PC-9 (cell line): ENCODE measurements at regions of chr12 and their contacts with region 1.

Region 1: DNA sequence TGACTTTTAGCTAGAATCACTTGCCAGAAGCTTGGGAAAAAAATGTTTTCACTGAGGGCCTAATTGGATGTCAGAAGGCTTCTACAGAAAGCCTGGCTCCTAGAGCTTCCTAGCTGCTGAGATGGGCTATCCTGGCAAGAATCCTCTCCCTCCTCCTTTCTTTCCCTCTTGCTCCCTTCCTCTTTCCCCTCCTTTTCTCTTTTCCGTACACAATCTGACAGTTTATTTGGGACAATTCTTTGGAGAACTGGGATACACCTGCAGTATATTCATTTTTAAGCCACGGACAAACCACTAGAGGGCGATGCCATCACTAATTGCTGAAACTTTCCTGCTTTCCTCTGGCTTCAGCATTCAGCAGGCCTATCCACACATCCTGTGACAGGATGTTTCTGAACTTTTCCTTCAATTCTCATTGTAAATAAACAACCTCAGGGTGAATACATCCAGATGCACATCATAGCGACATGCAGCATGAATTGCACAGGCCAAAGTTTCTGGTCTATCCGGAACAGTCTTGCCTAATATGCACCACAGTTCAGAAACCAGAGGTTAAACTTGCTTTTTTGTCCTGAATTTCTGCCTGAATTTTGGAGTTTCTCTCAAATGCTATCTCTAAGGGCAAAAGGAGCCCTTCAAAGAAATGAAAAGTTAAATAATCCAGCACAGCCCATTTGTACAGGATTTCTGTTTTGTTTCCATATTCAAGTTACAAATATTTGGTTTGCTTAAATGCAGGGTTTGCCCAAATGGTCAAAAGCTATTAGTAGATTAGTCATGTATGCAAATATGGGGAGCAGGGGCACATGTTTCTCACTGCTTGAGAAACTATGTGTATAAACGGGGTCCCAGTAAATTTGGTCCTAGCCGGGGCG is 142.8 kb downstream of the PAWR start:
- DNase-seq: peak; percentile 70 to 90
- H3K4me3 ChIP-seq: peak overlapping the region; percentile 37; the same call in 1 of the 2 replicates
- H3K27ac ChIP-seq: peak overlapping the region; percentile 99
- H3K4me1 ChIP-seq: peaks cover 67% of the 10 kb centered on the region
- H3K27me3 ChIP-seq: no peaks in the 10 kb centered on the region
- CTCF ChIP-seq: peak; percentile 91

Region 2: DNA sequence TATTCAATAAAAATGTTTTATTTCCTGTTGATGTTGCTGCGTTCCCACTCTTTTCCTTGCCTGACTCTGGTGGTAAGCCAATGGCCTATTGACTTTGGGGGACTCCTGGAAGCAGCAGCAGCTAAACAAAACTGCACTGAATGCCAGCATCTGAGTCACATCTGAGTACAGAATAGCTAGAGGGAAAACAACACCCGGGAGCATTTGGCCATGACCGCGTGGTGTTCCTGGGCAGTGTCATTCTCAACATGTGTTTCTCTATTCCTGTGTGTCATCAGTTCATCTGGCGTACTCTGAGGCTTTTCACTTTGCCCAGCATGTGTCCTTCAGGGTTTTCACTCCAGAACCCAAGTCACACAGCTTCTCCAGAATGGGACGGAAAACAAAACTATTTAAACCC is 96.0 kb before region 1 on chr12:
- CTCF ChIA-PET with region 1: no interaction called
- POLR2A ChIA-PET with region 1: no interaction called
- intact Hi-C with region 1: loop called (anchors 1 kb)
- DNase-seq: peak; percentile 55 to 66
- H3K4me3 ChIP-seq: no peak overlapping the region
- H3K27ac ChIP-seq: no peak overlapping the region
- H3K4me1 ChIP-seq: no peaks in the 10 kb centered on the region
- H3K27me3 ChIP-seq: no peaks in the 10 kb centered on the region
- CTCF ChIP-seq: no peak

Region 3: GRCh38 chr12:79685068-79685467 is 137.1 kb after region 1 on chr12:
- CTCF ChIA-PET with region 1: interaction called, 3 read pairs
- POLR2A ChIA-PET with region 1: no interaction called
- intact Hi-C with region 1: loop called (anchors 1 kb)
- DNase-seq: peak in 1 of 2 experiments; percentile 76
- H3K4me3 ChIP-seq: peak overlapping the region; percentile 82
- H3K27ac ChIP-seq: peak overlapping the region; percentile 99
- H3K4me1 ChIP-seq: peaks cover 58% of the 10 kb centered on the region
- H3K27me3 ChIP-seq: no peaks in the 10 kb centered on the region
- CTCF ChIP-seq: no peak

Region 4: GRCh38 chr12:79690638-79691493 is 142.9 kb after region 1 on chr12 and contains the start of gene PAWR:
- CTCF ChIA-PET with region 1: interaction called, 4 read pairs
- POLR2A ChIA-PET with region 1: interaction called, 18 read pairs
- intact Hi-C with region 1: loop called (anchors 1 kb)
- DNase-seq: peak; percentile 71 to 89
- H3K4me3 ChIP-seq: peak within 1 kb of the TSS; percentile 82
- H3K27ac ChIP-seq: peak within 1 kb of the TSS; percentile 99
- H3K4me1 ChIP-seq: peaks cover 38% of the 10 kb centered on the region
- H3K27me3 ChIP-seq: no peaks in the 10 kb centered on the region
- CTCF ChIP-seq: no peak; the same call in 1 of the 2 replicates
- total RNA-seq, gene PAWR: 204 and 361 TPM in 2 replicates

Region 5: DNA sequence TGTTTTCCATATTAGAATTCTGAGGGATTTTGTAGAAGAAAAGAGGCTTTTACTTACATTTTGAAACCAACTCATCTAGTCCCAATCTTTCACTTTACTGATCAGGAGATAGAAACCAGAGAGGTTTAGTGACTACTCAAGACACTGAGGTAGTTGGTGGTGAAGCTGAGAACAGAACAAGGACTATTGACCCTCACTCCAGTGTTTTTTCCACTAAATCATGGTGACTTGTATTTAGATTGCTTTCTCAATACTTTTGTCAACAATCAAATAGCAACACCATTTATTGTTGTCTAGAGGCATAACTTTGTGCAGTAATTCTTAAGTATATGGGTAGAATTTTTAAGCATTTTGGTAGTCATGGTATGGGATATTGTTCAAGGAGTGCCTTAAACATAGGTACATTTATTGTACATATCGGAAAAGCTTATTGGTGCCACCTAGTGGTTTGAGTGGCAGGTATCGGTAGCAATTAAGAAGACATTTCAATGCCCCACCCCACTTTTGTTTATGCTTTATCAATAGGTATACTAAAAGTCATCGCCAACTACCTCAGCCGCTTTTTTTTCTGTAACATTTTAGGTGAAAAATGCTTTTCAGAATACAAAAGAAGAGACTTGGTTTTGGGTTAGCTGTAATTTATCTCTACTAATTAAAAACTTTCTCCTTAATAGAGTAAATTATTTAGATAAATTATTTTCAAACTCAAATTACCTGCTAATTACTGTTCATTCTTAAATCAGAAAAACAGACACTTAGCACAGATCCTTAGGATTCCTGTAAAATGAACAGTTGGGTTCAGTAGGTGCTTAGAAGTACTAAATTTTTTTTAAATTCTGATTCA is 190.1 kb after region 1 on chr12:
- CTCF ChIA-PET with region 1: no interaction called
- POLR2A ChIA-PET with region 1: no interaction called
- intact Hi-C with region 1: loop called (anchors 2 kb)
- DNase-seq: peak; percentile 22 to 63
- H3K4me3 ChIP-seq: no peak overlapping the region
- H3K27ac ChIP-seq: no peak overlapping the region
- H3K4me1 ChIP-seq: peaks cover 12% of the 10 kb centered on the region; the same call in 1 of the 2 replicates
- H3K27me3 ChIP-seq: no peaks in the 10 kb centered on the region
- CTCF ChIP-seq: peak; percentile 81

Region 6: DNA sequence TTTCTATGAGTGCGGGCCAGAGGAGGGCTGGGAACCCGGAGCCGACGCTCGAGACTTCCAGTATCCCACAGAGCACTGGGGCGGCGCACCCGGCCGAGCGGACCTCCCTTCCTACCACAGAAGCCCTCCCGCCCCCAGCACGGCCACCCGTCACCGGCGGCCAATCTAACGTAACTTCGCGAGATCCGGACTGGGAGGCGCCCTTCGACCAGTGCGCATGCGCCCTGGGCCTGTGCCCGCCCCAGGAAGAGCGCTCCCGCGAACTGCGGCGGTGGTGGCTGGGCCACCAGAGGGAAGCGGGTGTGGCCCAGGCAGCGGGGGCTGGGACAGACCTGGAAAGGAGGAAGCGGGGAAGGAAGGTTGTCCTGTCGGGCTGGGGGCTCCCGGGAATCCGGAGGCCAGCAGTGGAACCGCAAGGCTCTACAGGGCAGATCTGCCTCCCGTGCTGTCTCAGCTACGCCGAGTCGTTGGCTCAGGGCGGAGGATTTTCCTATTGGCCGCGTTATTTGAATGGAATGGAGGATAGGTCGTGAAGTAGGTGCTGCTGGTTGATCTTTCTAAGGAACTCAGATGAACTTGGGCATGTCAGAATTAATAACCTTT is 387.1 kb after region 1 on chr12 and contains the start of gene PPP1R12A:
- CTCF ChIA-PET with region 1: no interaction called
- POLR2A ChIA-PET with region 1: interaction called, 4 read pairs
- intact Hi-C with region 1: loop called (anchors 5 kb)
- DNase-seq: peak; percentile 88 to 97
- H3K4me3 ChIP-seq: peak within 1 kb of the TSS; percentile 70
- H3K27ac ChIP-seq: peak within 1 kb of the TSS; percentile 71
- H3K4me1 ChIP-seq: peaks cover 29% of the 10 kb centered on the region
- H3K27me3 ChIP-seq: no peaks in the 10 kb centered on the region
- CTCF ChIP-seq: no peak
- total RNA-seq, gene PPP1R12A: 55.8 and 69.9 TPM in 2 replicates

Region 7: DNA sequence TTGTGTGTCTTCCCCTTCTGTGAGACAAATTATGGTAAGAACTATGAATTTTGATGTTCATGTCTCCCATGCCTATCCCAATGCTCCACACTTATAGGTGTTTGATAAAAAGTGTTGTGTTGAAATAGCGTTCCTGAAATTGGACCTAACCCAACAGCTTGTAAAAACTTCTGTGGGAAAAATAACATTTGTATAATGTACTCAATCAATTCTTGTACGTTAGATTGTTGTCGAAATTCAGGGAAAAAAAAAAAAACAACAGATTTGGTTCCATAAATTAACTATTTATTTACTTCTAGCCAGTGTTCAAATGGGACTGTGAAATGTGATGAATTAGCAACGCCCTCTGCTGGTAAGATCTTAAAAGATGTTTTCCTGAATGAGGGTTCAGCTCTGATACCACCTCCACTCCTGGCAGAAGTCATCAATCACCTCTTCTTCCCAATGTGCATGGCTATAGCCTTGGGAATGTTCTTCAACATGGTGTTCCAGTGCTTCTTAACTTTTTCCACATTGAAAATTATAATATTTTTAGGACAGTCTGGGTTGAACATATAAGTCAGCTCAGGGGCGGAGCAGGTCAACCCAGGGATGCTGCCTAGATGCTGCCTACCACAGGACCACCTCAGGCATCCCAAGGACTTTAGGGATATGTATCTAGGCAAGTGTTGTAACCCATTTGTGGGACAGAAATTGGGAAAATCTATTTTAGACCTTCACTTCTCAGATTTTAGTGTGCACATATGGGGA is 722.0 kb after region 1 on chr12:
- CTCF ChIA-PET with region 1: no interaction called
- POLR2A ChIA-PET with region 1: no interaction called
- intact Hi-C with region 1: loop called (anchors 5 kb)
- DNase-seq: no peak
- H3K4me3 ChIP-seq: no peak overlapping the region
- H3K27ac ChIP-seq: no peak overlapping the region
- H3K4me1 ChIP-seq: peaks cover 20% of the 10 kb centered on the region
- H3K27me3 ChIP-seq: no peaks in the 10 kb centered on the region
- CTCF ChIP-seq: peak; percentile 84